Motor neuron (in vitro differentiated cells): ENCODE measurements at regions of chr1 and their contacts with region 1.

Region 1: GRCh38 chr1:209860293-209860881 is 32.6 kb downstream of the UTP25 start:
- ATAC-seq: peak; percentile 80 to 97 (median 94)
- H3K4me3 ChIP-seq: no peak overlapping the region
- H3K27ac ChIP-seq: no peak overlapping the region
- H3K4me1 ChIP-seq: no peaks in the 10 kb centered on the region

Region 2: GRCh38 chr1:209989525-209989924 is 129.1 kb after region 1 on chr1:
- in situ Hi-C with region 1: loop called in 8 of 9 experiments (anchors 10 to 25 kb)
- ATAC-seq: peak in 3 of 8 experiments; percentile 63 to 69 (median 65)
- H3K4me3 ChIP-seq: no peak overlapping the region
- H3K27ac ChIP-seq: no peak overlapping the region
- H3K4me1 ChIP-seq: no peaks in the 10 kb centered on the region

Region 3: GRCh38 chr1:210301615-210302000 is 441.2 kb after region 1 on chr1:
- in situ Hi-C with region 1: loop called in 3 of 9 experiments (anchors 25 kb)
- ATAC-seq: peak; percentile 16 to 52 (median 28)
- H3K4me3 ChIP-seq: no peak overlapping the region
- H3K27ac ChIP-seq: no peak overlapping the region
- H3K4me1 ChIP-seq: peaks cover 23 to 32% of the 10 kb centered on the region in 2 donors

Region 4: GRCh38 chr1:210311726-210312493 is 451.5 kb after region 1 on chr1:
- in situ Hi-C with region 1: loop called in 4 of 9 experiments (anchors 10 to 25 kb)
- ATAC-seq: no peak
- H3K4me3 ChIP-seq: no peak overlapping the region
- H3K27ac ChIP-seq: no peak overlapping the region
- H3K4me1 ChIP-seq: no peaks in the 10 kb centered on the region